ENCODE measurements at regions of chr21 and their contacts with region 1.

Region 1: GRCh38 chr21:15592271-15592860 is 137.4 kb upstream of the USP25 start:
- DNase-seq: peak; percentile 44
- ATAC-seq: no peak
- H3K4me3 ChIP-seq: no peak overlapping the region
- H3K27ac ChIP-seq: no peak overlapping the region
- H3K4me1 ChIP-seq: peaks cover 7% of the 10 kb centered on the region; the same call in 1 of the 2 replicates
- H3K27me3 ChIP-seq: no peaks in the 10 kb centered on the region
- CTCF ChIP-seq: peak; percentile 73
- EP300 ChIP-seq: no peak
- POLR2A ChIP-seq: no peak
- RAD21 ChIP-seq: peak; percentile 61; the same call in 1 of the 2 replicates

Region 2: DNA sequence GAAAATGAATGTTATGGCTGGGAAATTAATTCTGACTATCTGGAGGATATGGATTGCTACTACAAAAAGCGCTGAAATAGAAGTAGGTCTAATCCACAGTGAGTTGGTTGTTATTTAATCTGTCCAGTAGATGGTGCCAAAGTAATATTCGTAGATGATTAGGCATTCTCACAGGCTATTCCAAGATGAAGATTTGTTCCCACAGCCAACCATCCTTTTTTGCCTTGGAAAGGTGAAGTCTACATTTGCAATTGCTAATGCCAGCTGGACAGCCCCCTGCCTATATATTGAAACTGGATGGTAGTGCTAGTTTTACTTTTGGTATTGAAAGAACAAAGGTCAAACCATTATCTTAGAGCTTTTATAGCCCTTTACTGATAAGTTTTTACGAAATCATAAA is 1332.6 kb before region 1 on chr21:
- CTCF ChIA-PET with region 1: interaction called, 4 read pairs
- POLR2A ChIA-PET with region 1: no interaction called
- in situ Hi-C with region 1: loop called (anchors 25 kb)
- intact Hi-C with region 1: loop called (anchors 1 kb)
- DNase-seq: peak; percentile 39
- ATAC-seq: peak; percentile 82
- H3K4me3 ChIP-seq: no peak overlapping the region
- H3K27ac ChIP-seq: no peak overlapping the region
- H3K4me1 ChIP-seq: no peaks in the 10 kb centered on the region
- H3K27me3 ChIP-seq: no peaks in the 10 kb centered on the region
- CTCF ChIP-seq: peak; percentile 67
- EP300 ChIP-seq: no peak
- POLR2A ChIP-seq: no peak
- RAD21 ChIP-seq: no peak

Region 3: DNA sequence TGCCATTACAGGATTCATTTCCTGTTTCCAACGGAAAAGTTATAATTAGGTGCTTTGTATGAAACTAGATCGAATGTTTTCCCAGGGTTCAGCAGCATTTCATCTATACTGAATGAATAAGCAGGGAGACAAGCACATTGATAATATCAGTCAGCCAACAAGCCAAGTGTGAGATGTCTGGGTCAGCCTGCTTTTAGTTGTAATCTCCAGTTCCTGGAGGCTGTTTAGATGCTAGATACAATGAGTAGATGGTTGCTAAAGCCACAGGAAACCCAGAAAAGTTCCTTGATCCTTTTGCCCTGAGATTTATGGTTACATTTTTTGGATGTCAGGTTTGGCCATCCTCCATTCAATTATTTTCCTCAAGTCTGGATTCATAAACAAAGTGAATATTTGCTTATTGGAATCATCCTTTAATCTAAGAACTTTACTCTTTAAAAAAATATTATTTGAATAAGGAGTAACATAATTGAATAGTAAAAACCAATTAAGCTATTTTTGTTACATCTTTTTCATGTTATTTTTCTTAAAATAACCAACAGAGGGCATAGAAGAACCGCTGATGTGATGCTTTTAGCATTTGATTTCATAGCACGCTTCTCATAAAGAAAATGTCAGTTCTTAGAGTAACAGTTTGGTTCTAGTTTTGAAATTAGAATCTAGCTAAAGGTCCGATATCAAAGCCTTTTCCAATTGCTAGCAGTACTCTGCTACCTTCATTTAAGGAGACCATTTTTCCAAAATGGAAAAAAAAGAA is 1286.0 kb before region 1 on chr21:
- CTCF ChIA-PET with region 1: no interaction called
- POLR2A ChIA-PET with region 1: no interaction called
- in situ Hi-C with region 1: no loop called
- intact Hi-C with region 1: loop called (anchors 5 kb)
- DNase-seq: no peak
- ATAC-seq: no peak
- H3K4me3 ChIP-seq: no peak overlapping the region
- H3K27ac ChIP-seq: no peak overlapping the region
- H3K4me1 ChIP-seq: no peaks in the 10 kb centered on the region
- H3K27me3 ChIP-seq: 0 out of 5 replicates have a peak, but pooled peaks cover 0 to 2% of the 10 kb centered on the region in 2 experiments
- CTCF ChIP-seq: no peak
- EP300 ChIP-seq: no peak
- POLR2A ChIP-seq: no peak
- RAD21 ChIP-seq: no peak

Region 4: DNA sequence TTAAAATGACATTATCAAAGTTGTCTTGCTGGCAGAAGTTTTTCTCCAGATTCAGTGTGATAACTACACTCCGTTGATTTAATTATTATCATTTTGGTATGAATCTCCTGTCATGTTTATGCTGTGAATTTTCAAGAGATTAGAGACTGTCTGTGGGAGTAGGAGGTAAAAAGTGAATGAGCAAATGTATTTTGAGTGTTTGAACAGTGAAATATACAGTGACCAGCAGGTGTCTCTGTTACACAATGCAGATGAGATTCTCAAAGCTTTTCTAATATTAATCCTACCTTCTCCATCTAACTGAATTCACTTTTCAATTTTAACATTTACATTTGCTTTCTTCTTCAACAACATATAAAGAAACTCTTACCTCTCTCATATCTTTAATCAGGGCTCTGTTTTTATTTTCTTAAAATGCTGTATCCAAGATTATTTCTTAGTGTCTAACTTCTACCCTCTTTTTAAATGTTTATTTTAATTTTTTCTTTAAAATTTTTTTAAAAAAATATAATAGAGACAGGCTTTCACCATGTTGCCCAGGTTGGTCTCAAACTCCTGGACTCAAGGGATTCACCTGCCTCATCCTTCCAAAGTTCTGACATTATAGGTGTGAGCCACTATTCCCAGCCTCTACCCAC is 1188.6 kb before region 1 on chr21:
- CTCF ChIA-PET with region 1: interaction called, 13 read pairs
- POLR2A ChIA-PET with region 1: no interaction called
- in situ Hi-C with region 1: loop called (anchors 25 kb)
- intact Hi-C with region 1: loop called (anchors 1 kb)
- DNase-seq: peak; percentile 19
- ATAC-seq: peak; percentile 64
- H3K4me3 ChIP-seq: no peak overlapping the region
- H3K27ac ChIP-seq: no peak overlapping the region
- H3K4me1 ChIP-seq: no peaks in the 10 kb centered on the region
- H3K27me3 ChIP-seq: no peaks in the 10 kb centered on the region; a peak in 1 of 5 replicates
- CTCF ChIP-seq: peak; percentile 59
- EP300 ChIP-seq: no peak
- POLR2A ChIP-seq: no peak
- RAD21 ChIP-seq: 0 out of 2 replicates have a peak, but pooled peaks have one; percentile 19

Region 5: DNA sequence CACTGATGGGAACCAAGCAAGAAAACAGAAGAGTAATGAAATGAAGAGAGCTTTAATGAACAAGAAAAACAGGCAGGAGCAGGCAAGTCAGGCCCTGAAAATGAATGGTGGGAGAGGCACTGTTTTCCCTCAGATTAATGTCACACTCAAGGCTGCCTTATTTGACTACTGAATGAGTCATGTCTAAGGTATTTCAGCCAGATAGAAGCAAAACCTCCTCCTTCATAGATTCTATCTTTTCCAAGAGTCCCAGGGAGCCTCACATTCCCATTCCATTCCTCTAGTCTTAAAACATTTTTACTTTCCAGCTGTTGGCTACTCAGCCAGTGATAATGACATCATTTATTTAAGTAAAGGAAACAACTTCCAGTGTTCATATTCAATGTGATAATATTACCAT is 299.1 kb before region 1 on chr21:
- CTCF ChIA-PET with region 1: no interaction called
- POLR2A ChIA-PET with region 1: no interaction called
- in situ Hi-C with region 1: no loop called
- intact Hi-C with region 1: no loop called
- DNase-seq: peak; percentile 30
- ATAC-seq: no peak
- H3K4me3 ChIP-seq: no peak overlapping the region
- H3K27ac ChIP-seq: no peak overlapping the region
- H3K4me1 ChIP-seq: peaks cover 37% of the 10 kb centered on the region
- H3K27me3 ChIP-seq: no peaks in the 10 kb centered on the region
- CTCF ChIP-seq: no peak
- EP300 ChIP-seq: no peak
- POLR2A ChIP-seq: no peak
- RAD21 ChIP-seq: no peak

Region 6: DNA sequence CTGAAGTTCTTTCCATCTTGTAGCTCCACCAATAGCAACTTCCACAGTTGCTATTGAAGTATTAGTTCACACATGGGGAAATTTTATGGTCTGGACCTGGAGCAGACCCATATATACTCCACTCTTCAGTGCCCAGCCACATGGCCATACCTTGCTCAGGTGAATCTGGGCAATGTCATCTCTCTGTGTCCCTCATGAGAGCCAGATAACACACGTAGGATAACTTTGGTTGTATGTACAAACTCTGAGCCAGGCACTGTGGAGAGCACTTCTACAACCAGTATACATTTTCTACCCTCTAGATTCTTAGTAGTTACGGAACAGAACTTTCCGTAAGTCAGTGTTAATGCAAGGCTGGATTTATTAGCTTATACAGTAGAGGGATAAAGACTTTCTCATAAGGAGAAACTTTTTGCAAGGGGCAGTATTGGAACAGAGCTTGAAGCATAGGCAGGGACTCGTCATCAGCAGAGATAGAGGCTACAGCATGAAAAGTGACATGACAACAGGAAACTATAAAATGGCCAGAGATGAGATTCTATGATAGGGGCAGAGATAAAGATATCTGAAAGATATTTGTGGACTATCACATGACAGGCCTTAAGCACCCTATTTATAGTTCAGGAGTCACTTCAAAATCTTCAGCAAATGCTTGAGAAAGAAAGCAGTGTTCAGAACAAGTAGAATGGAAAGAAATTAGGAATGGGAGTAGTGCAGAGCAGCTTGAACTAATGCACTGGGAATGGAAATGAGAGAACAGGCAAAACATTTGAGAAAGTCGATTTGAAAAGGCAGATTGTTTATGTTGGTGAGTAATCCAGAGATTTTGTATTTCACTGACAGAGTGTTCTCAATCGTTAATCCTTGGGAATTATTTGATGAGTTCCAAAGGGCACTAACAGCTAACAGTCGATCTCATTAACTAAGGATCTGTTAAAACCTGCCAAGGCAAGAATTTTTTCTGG is 619.3 kb after region 1 on chr21:
- CTCF ChIA-PET with region 1: no interaction called
- POLR2A ChIA-PET with region 1: no interaction called
- in situ Hi-C with region 1: no loop called
- intact Hi-C with region 1: no loop called
- DNase-seq: no peak
- ATAC-seq: no peak
- H3K4me3 ChIP-seq: no peak overlapping the region
- H3K27ac ChIP-seq: no peak overlapping the region
- H3K4me1 ChIP-seq: no peaks in the 10 kb centered on the region
- H3K27me3 ChIP-seq: no peaks in the 10 kb centered on the region
- CTCF ChIP-seq: no peak
- EP300 ChIP-seq: no peak
- POLR2A ChIP-seq: no peak
- RAD21 ChIP-seq: no peak

Measured in HepG2 (cell line).